Activated T-helper 2 cell treated with anti-CD3 and anti-CD28 coated beads, Interferon-gamma antibody, Interleukin-2, Interleukin-4, amounts not matched to agents 10 μg/mL and 5 μg/mL and 100 μg/mL, durations not matched to agents 14 hours and 24 hours and 36 hours (primary cell): ENCODE measurements at regions of chr12 and their contacts with region 1.

Region 1: DNA sequence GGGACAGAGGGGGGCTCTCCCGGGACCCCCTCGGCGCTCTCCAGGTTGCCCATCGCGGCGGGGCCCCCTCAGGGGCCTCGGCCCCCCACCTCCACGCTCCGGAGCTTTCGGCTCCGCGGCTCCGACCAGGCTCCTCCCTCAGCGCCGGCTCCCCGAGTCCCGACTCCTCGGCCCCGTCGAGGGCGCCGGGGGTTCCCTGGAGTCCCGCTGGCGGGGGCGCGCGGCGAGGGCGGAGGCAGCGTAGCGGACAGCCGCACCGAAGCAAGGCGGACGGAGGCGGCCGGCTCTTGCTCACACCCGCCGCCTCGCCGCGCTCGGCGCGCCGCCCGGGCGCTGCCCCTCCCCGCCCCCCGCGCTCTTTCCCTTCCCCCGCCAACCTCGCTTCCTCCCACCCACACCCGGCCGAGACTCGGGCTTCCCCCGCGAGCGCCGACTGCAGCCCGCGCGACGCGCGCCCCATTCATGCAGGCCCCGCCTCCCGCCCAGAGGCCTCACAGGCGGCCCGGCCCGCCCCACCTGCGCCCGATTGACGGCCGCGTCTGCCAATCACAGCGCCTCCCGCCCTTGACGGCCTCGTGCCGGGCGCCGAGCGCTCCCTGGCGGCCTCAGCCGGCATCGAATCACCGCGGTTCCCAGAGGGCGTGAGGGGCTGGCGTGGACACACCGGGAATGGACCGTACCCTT is at the start of gene FMNL3:
- DNase-seq: peak; percentile 98
- H3K4me3 Mint-ChIP-seq: peak within 1 kb of the TSS; percentile 94
- H3K27ac Mint-ChIP-seq: peak within 1 kb of the TSS; percentile 84
- H3K4me1 Mint-ChIP-seq: peaks cover 43% of the 10 kb centered on the region
- H3K27me3 Mint-ChIP-seq: peaks cover 21% of the 10 kb centered on the region
- total RNA-seq, gene FMNL3: 36.2 and 38.0 TPM in 2 replicates

Region 2: GRCh38 chr12:49366652-49367380 is 340.5 kb before region 1 on chr12:
- intact Hi-C with region 1: loop called (anchors 5 kb)
- DNase-seq: peak; percentile 90
- H3K4me3 Mint-ChIP-seq: peak overlapping the region; percentile 86
- H3K27ac Mint-ChIP-seq: peak overlapping the region; percentile 95
- H3K4me1 Mint-ChIP-seq: peaks cover 35% of the 10 kb centered on the region
- H3K27me3 Mint-ChIP-seq: no peaks in the 10 kb centered on the region

Region 3: DNA sequence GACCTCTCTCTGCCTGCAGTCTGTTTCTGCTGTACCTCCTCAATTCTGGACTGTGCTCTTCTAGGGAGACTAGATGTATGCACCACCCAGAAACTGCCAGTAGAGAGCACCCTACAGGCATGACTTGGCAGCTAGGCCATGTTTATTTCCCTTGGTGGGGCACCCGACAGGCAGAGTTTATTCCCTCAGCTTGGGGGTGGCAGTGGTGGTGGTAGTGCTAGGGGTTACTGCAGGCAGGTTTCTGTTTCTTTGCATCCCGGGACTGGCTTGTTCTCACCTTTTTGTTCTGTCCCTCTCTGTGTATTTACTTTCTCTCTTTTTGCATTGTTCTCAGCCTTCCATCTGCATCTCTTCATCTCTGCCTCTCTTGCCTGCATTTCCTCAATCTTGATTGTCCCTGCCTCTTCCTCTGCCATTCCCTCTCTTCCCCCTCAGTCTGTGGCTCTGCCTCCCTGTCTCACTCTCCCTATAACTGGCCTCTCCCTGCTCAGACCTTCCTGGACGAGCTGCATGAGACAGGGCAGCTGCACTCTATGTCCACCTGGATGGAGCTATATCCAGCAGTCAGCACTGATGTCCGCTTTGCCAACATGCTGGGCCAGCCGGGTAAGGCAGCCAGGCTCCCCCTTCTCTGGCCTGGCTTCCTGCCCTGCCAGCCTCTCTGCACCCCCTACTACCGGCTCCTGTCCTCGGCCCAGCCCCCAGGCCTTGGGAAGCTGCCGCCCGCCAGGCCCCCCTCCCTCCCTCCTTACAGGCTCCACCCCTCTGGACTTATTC is 70.1 kb before region 1 on chr12:
- intact Hi-C with region 1: loop called (anchors 2 kb)
- DNase-seq: peak; percentile 49
- H3K4me3 Mint-ChIP-seq: no peak overlapping the region
- H3K27ac Mint-ChIP-seq: no peak overlapping the region
- H3K4me1 Mint-ChIP-seq: peaks cover 6% of the 10 kb centered on the region
- H3K27me3 Mint-ChIP-seq: no peaks in the 10 kb centered on the region

Region 4: DNA sequence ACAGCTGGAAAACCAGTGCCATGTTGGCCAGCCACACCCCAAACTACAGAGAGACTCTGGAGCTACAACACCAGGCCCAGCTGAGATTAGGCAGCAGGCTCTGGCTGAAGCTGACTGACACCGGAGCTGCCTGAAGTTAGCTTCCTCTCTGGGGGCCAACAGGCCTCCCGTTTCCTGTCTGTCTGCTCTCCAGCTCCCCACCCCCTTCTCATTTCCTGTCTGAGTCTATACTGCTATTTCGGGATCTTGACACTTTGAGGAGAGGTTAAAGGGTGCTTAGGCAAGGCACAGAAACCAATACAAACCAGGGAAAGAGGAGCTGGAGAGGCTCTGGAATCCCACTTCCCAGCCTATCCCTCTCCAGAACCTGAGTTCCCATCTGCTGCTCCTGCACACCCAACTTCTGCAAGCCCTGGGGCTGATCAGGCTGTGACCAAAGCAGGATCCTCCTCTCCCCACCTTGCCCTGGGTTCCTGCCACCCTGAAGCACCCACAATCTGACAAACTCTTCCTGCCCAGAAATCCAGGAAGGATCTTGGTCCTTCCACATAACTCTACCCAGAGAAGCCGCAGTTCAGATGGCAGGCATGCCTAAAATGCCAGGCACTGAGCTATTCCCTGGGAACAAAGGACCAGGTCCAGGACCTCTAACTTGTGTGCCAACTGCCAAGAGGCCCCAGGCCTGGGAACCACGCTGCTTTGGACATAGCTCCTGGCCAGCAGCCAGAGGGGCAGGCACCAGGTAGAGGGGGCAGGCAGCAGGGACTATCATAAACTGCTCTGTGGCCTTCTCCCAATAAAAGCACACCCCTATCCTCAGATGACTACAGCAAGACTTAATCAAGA is 44.0 kb before region 1 on chr12:
- intact Hi-C with region 1: loop called (anchors 1 kb)
- DNase-seq: peak; percentile 65
- H3K4me3 Mint-ChIP-seq: peak overlapping the region; percentile 66
- H3K27ac Mint-ChIP-seq: peak overlapping the region; percentile 91
- H3K4me1 Mint-ChIP-seq: peaks cover 59% of the 10 kb centered on the region
- H3K27me3 Mint-ChIP-seq: no peaks in the 10 kb centered on the region

Region 5: GRCh38 chr12:49740930-49741881 is 33.9 kb after region 1 on chr12 and contains the start of gene TMBIM6:
- intact Hi-C with region 1: loop called (anchors 2 kb)
- DNase-seq: peak; percentile 99
- H3K4me3 Mint-ChIP-seq: peak within 1 kb of the TSS; percentile 88
- H3K27ac Mint-ChIP-seq: peak within 1 kb of the TSS; percentile 96
- H3K4me1 Mint-ChIP-seq: peaks cover 27% of the 10 kb centered on the region
- H3K27me3 Mint-ChIP-seq: peaks cover 4% of the 10 kb centered on the region
- total RNA-seq, gene TMBIM6: 405 and 431 TPM in 2 replicates